PC-9 (cell line): ENCODE measurements at regions of chr15 and their contacts with region 1.

Region 1: GRCh38 chr15:50354838-50355618 is at the start of gene GABPB1:
- DNase-seq: peak; percentile 54 to 85
- H3K4me3 ChIP-seq: peak within 1 kb of the TSS; percentile 76
- H3K27ac ChIP-seq: peak within 1 kb of the TSS; percentile 96
- H3K4me1 ChIP-seq: peaks cover 30% of the 10 kb centered on the region
- H3K27me3 ChIP-seq: no peaks in the 10 kb centered on the region
- CTCF ChIP-seq: no peak
- total RNA-seq, gene GABPB1: 21.7 and 22.0 TPM in 2 replicates

Region 2: DNA sequence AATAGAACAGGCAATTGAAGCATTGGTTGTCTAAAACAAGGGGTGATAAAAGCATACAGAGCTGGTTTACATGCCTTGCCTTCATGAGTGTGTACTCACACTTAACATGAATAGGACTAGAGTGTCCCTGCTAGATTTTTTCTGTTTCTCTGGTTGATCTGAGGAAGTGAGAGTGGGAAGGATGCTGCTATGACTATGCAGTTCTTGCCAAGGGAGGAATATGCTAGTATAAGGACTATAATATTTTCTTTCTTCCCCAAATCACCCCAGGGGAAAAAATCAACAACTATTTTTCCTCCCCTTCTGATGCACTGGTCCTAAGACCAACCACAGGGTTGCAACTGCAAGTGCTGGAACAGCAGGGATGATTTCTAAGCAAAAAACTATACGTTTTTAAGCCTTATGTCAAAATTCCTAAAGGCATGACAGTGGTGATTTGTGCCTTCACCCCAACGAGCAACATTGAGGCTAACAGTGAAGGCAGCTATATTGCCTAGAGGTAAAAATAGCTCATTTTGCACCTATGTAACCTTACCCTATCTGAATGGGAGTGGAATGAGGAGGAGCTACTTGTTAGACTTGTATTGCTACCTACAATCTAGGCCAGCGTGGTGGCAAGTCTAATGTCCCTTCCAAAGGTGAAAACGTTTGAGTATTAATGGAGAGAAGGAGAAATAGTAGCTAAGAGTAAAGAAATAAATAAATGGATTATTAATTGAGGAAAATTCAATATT is 35.7 kb after region 1 on chr15:
- CTCF ChIA-PET with region 1: no interaction called
- POLR2A ChIA-PET with region 1: interaction called, 15 read pairs
- intact Hi-C with region 1: loop called (anchors 2 kb)
- DNase-seq: peak; percentile 37 to 67
- H3K4me3 ChIP-seq: no peak overlapping the region
- H3K27ac ChIP-seq: peak overlapping the region; percentile 69
- H3K4me1 ChIP-seq: peaks cover 19% of the 10 kb centered on the region
- H3K27me3 ChIP-seq: no peaks in the 10 kb centered on the region
- CTCF ChIP-seq: no peak

Region 3: DNA sequence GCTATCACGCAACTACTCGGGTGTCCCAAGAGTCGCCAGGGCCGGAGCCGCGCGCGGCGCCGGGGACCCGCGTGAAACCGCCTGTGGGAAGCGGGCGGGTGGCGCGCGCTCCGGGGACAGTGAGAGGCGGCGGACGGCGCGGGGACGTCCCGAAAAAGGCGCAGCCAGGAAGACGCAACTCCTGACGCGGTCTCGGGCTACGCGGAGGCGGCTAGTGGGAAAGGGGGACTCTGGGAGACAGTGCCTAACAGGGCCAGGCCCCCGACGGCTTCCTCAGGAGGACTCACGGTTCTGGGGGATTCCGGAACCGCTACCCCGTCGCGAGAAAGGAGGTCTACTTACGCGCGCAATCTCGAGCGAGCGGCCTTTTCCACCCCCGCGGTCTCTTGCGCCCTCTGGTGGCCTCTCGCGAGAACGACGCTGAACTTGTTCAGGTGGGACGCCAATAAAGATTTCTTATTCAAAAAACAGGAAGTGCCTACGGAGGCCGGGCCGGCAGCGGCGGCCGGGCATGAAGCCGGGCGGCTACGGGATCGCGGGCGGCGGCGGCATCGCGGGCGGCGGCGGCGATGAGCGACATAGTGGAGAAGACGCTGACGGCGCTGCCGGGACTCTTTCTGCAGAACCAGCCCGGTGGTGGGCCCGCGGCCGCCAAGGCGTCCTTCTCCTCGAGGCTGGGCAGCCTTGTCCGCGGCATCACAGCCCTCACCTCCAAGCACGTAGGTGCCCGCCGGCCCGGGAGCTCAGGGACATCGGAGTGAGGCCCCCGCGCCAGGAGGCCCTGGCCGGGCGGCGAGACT is 553.4 kb after region 1 on chr15 and contains the start of gene AP4E1:
- CTCF ChIA-PET with region 1: no interaction called
- POLR2A ChIA-PET with region 1: no interaction called
- intact Hi-C with region 1: loop called (anchors 5 kb)
- DNase-seq: peak; percentile 76 to 88
- H3K4me3 ChIP-seq: peak within 1 kb of the TSS; percentile 74
- H3K27ac ChIP-seq: peak within 1 kb of the TSS; percentile 46; the same call in 1 of the 2 replicates
- H3K4me1 ChIP-seq: peaks cover 7% of the 10 kb centered on the region; the same call in 1 of the 2 replicates
- H3K27me3 ChIP-seq: no peaks in the 10 kb centered on the region
- CTCF ChIP-seq: peak; percentile 86
- total RNA-seq, gene AP4E1: 5.7 and 10.0 TPM in 2 replicates